GM10248 (cell line): ENCODE measurements at regions of chr3 and their contacts with region 1.

Region 1: DNA sequence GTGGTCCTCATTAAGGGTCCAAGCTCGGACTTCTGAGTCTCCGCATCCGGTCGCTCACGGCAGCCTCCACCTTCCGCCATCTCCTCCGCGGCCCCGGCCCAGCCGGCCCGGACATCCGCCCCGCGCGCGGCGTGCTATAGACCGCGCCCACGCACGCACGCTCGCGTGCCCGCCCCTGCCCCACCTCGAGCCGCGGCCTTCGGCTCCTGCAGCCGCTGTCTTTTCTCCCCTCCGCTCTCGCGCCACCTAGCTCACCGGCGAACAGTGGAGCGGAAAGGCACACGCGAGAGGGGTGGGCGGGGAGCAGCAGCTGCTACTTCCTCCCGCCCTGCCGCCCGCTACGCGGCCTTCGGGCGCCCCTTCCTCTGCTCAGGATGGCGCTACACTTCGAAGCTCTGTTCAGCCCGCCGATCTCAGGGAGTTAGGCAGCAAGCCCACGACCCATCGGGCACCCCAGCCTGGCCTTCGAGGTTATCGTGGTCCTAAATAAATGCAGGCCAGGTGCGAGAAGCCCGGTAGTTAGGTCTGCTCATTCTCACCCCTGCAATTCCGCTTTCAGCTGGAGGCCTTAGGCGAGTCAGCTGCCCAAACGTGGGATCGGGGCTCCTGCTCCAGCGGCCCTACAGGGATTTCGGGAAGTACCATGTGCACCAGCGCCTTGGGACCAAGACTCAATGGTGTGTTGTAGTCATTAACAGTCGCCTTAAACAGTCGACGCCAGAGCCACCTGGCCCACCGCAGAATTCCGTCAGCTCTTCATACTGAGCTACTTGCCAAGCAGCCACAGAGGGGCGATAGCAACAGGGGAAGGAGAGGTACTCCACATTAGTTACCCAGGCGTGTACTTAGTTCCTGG is at the start of gene USP4:
- DNase-seq: peak; percentile 95
- CTCF ChIP-seq: peak; percentile 71

Region 2: GRCh38 chr3:49171119-49171774 is 168.9 kb before region 1 on chr3 and contains the start of gene KLHDC8B:
- CTCF ChIA-PET with region 1: interaction called, 13 read pairs
- POLR2A ChIA-PET with region 1: no interaction called
- DNase-seq: peak; percentile 91
- CTCF ChIP-seq: peak; percentile 97

Region 3: GRCh38 chr3:49327485-49327884 is 12.7 kb before region 1 on chr3:
- CTCF ChIA-PET with region 1: interaction called, 12 read pairs
- POLR2A ChIA-PET with region 1: no interaction called
- DNase-seq: no peak
- CTCF ChIP-seq: peak; percentile 9

Region 4: GRCh38 chr3:49351521-49352011 is 11.4 kb after region 1 on chr3:
- CTCF ChIA-PET with region 1: interaction called, 37 read pairs
- POLR2A ChIA-PET with region 1: interaction called, 22 read pairs
- DNase-seq: no peak
- CTCF ChIP-seq: no peak

Region 5: GRCh38 chr3:49358217-49358883 is 18.2 kb after region 1 on chr3 and contains the start of gene GPX1:
- CTCF ChIA-PET with region 1: interaction called, 37 read pairs
- POLR2A ChIA-PET with region 1: interaction called, 22 read pairs
- DNase-seq: peak; percentile 90
- CTCF ChIP-seq: no peak

Region 6: GRCh38 chr3:49411968-49412631 is 71.9 kb after region 1 on chr3 and contains the starts of genes RHOA and TCTA:
- CTCF ChIA-PET with region 1: interaction called, 15 read pairs
- POLR2A ChIA-PET with region 1: interaction called, 26 read pairs
- DNase-seq: peak; percentile 99
- CTCF ChIP-seq: no peak

Region 7: DNA sequence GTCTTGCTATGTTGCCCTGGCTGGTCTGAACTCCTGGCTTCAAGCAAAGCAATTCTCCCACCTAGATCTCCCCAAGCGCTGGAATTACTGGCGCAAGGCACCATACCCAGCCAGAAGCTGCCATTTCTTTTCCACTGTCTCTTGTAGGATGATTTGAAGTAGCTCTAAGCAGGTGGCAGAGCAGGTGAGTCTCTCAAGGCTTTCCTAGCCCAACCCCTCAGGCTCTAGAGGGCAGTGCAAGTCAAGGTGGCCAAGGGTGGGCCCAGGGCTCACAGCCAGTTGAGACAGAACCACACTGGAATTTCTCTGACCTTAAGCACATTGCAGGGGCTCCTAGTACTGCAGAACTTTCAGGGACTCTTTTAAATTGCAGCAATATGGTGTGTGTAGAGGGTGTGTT is 114.3 kb after region 1 on chr3:
- CTCF ChIA-PET with region 1: interaction called, 30 read pairs
- POLR2A ChIA-PET with region 1: interaction called, 5 read pairs
- DNase-seq: peak; percentile 12
- CTCF ChIP-seq: peak; percentile 36